ENCODE measurements at regions of chr14 and their contacts with region 1.

Region 1: GRCh38 chr14:54396493-54397335 is at the start of gene CDKN3:
- DNase-seq: peak; percentile 95

Region 2: GRCh38 chr14:54381821-54382220 is 14.9 kb before region 1 on chr14:
- CTCF ChIA-PET with region 1: no interaction called
- POLR2A ChIA-PET with region 1: interaction called, 11 read pairs
- DNase-seq: no peak